Esophagus muscularis mucosa (tissue), 4 donors: ENCODE measurements at regions of chr2 and their contacts with region 1.

Region 1: DNA sequence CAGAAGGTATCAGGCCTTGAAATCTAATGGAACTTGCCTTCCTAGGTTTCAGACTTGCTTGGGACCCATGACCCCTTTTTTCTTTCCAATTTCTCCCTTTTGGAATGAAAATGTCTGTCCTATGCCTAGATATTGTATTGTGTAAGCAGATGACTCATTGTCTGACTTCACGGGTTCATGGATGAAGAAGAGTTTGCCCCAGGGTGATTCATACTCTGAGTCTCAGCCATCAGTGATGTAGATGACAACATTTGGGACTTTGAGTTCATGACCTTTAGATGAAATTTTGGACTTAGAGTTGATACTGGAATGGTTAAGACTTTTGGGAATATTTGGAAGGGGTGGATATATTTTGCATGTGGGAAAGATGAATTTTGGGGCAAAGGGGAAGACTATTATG is 11.2 kb upstream of the SCYGR5 start:
- DNase-seq: no peak
- H3K4me3 ChIP-seq: no peak overlapping the region
- H3K27ac ChIP-seq: peak overlapping the region in 1 of 4 donors; percentile 13
- H3K4me1 ChIP-seq: no peaks in the 10 kb centered on the region
- H3K27me3 ChIP-seq: no peaks in the 10 kb centered on the region
- CTCF ChIP-seq: no peak
- EP300 ChIP-seq: no peak
- POLR2A ChIP-seq: no peak

Region 2: GRCh38 chr2:227406177-227407031 is 249.1 kb before region 1 on chr2:
- intact Hi-C with region 1: loop called (anchors 5 kb)
- DNase-seq: no peak
- H3K4me3 ChIP-seq: peak overlapping the region in 1 of 4 donors; percentile 6
- H3K27ac ChIP-seq: peak overlapping the region; percentile 58 to 72 (median 70)
- H3K4me1 ChIP-seq: peaks cover 15 to 17% (median 16%) of the 10 kb centered on the region in 4 donors
- H3K27me3 ChIP-seq: peaks cover 0 to 4% (median 0%) of the 10 kb centered on the region in 4 donors
- CTCF ChIP-seq: peak; percentile 62 to 65 (median 62)
- EP300 ChIP-seq: no peak
- POLR2A ChIP-seq: no peak

Region 3: DNA sequence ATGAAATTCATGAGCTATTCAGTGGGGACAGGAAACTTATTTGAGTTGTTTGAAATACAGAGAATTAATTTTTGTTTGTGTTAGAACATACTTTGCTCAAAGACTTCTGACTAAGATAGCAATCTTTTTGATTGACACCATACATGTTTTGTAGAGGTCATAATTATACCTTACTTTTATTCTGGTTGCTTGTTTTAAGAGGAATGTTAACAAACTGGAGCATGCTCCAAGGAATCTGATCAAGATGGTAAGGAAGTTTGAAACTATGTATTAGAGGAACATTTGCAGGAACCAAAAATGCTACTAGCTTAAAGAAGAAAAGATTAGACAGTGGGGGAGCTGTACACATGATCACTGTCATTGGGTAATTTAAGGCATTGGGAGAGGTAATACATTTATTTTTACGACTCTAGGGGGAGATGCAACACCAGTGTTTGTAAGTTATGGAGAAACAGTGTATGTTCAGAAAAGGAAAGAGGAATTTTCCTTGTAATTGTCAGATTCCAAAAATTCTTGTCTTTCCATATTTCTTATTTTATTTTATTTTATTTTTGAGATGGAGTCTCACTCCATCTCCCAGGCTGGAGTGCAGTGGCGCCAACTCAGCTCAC is 175.5 kb before region 1 on chr2:
- intact Hi-C with region 1: loop called (anchors 5 kb)
- DNase-seq: no peak
- H3K4me3 ChIP-seq: no peak overlapping the region
- H3K27ac ChIP-seq: no peak overlapping the region
- H3K4me1 ChIP-seq: peaks cover 4 to 73% (median 64%) of the 10 kb centered on the region in 4 donors
- H3K27me3 ChIP-seq: no peaks in the 10 kb centered on the region
- CTCF ChIP-seq: peak; percentile 24 to 32 (median 30)
- EP300 ChIP-seq: no peak
- POLR2A ChIP-seq: no peak

Region 4: DNA sequence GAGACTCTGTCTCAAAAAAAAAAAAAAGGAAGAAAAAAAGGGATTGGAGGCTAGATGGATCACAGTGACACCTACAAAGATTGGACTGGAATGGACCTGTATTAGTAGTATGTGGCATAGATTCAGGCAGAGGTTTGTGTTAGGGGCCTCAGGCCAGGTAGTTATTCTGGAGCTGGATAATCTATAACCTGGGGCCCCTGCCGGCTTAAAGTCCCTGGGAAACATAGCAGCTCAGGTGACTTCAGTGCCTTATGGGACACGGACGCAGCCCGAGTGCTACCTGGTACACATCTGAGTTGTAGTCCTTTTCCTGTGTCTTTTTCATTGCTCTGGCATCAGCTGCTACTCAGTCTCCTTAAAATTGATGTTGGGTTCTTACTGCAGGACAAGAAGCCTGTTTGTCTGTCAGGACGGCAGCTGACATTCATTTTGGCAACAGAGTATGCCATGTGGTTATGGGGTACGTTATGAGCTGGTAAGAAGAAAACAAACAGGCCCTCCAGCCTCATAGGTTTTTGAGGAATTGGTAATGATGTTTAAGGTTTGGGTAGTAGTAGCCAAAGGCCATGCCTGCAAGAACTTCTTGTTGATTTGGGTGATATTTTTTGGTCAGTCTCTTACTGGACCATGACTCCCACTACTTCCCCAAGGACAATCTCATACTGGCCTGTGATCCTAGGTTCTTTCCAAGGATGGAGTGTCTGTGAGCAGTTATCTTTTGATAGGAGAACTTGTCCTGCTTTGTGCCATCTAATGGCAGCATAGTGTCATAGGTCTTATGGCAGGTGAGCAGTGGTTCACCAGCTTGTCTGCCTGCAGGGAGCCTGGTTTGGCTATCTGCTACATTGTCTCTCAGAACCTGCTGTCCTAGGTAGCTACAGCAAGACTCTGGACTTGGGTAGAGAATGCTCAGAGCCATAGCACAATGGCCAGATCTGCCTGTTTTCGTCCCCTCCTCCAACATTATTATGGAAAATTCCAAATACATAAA is 155.5 kb before region 1 on chr2:
- intact Hi-C with region 1: no loop called
- DNase-seq: no peak
- H3K4me3 ChIP-seq: no peak overlapping the region
- H3K27ac ChIP-seq: no peak overlapping the region
- H3K4me1 ChIP-seq: peaks cover 12 to 30% (median 20%) of the 10 kb centered on the region in 4 donors
- H3K27me3 ChIP-seq: no peaks in the 10 kb centered on the region
- CTCF ChIP-seq: no peak
- EP300 ChIP-seq: no peak
- POLR2A ChIP-seq: no peak

Region 5: DNA sequence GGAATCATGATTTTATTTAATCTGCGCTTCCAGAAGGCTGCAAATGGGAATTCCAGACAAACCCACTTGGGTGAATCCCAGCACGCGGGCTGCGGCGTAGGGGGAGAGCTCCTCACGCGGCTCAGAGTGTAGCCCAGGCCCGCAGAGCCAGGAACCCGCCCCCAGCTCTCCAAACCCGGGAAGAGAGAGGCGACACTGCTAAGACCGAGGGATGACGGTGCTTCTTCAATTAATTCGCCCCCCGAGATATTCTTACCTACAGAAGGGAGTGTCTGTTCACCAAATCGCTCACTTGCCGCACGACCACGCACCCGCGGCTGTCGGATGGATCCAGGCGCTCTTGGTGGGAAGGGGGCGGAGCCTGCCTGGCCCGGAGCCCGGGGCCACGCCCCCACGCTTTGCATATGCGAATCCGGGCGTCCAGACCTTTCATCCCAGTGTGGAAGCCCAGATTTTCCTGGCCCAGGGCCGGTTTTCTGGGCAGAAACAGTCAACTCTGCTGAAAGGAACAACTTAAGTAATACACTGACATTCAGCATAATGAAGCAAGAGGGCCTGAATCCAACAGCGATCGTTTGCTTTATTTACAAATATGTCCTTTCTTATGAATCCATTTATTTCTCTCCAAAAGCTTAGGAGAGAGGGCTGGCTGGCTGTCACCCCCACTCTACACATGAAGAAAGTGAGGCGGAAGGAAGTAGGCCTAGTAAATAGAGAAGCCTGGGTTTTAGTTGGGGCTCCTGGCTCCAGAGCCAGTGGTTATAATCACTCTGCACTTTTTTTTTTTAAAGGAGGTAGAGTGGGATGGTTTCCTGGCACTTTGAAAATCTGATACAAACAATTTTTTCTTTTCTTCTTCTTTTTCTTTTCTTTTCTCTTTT is 62.5 kb after region 1 on chr2 and contains the start of gene SLC19A3:
- intact Hi-C with region 1: loop called (anchors 5 kb)
- DNase-seq: peak; percentile 93
- H3K4me3 ChIP-seq: peak within 1 kb of the TSS; percentile 51 to 58 (median 52)
- H3K27ac ChIP-seq: peak within 1 kb of the TSS; percentile 58 to 80 (median 65)
- H3K4me1 ChIP-seq: peaks cover 0 to 22% (median 19%) of the 10 kb centered on the region in 4 donors
- H3K27me3 ChIP-seq: no peaks in the 10 kb centered on the region
- CTCF ChIP-seq: no peak
- EP300 ChIP-seq: no peak
- POLR2A ChIP-seq: no peak
- total RNA-seq, gene SLC19A3: 0.40 to 1.5 (median 0.69) TPM

Region 6: GRCh38 chr2:227766373-227766883 is 111.0 kb after region 1 on chr2:
- intact Hi-C with region 1: loop called (anchors 1 kb)
- DNase-seq: no peak
- H3K4me3 ChIP-seq: no peak overlapping the region
- H3K27ac ChIP-seq: peak overlapping the region in 1 of 4 donors; percentile 32
- H3K4me1 ChIP-seq: peaks cover 0 to 9% (median 8%) of the 10 kb centered on the region in 4 donors
- H3K27me3 ChIP-seq: no peaks in the 10 kb centered on the region
- CTCF ChIP-seq: peak; percentile 83 to 94 (median 88)
- EP300 ChIP-seq: no peak
- POLR2A ChIP-seq: no peak